HEK293T (cell line): ENCODE measurements at regions of chr2 and their contacts with region 1.

Region 1: DNA sequence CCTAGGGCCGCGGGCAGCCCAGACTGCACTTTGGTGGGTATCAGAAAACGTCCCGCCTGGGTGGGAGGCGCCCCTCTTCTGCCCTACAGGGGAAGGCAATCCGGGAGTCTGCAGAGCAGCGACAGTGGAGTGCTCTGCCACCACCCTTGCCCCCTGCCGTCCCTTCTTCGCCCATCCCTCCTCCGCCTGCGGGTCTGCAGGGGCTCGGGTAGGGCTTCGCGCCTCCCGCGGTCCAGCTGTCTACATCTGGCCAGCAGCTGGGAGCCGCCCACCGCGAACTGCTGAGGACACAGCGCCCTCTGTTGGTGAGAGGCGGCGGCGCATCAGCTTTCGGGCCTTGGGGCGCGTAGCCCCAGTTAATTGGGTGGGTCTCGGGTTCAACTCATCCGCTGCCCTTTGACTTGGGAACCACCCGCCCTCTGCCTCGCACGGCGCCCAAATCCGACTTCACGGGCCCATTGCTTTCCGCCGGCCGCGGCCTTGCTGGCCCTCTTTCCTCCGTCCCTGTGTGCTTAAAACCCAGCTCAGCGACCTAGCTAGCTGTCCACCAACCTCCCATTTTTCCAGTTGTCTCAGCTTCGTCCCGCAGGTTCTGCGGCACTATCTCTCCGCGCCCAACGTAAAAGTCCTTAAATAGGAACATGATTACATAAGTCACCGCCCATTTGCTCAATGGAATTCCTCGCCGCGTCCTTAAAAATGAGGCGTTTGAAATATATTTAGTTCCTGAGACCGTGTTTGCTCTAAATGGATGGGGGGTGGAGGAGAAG is 17.6 kb downstream of the WNT10A start:
- DNase-seq: peak; percentile 83

Region 2: DNA sequence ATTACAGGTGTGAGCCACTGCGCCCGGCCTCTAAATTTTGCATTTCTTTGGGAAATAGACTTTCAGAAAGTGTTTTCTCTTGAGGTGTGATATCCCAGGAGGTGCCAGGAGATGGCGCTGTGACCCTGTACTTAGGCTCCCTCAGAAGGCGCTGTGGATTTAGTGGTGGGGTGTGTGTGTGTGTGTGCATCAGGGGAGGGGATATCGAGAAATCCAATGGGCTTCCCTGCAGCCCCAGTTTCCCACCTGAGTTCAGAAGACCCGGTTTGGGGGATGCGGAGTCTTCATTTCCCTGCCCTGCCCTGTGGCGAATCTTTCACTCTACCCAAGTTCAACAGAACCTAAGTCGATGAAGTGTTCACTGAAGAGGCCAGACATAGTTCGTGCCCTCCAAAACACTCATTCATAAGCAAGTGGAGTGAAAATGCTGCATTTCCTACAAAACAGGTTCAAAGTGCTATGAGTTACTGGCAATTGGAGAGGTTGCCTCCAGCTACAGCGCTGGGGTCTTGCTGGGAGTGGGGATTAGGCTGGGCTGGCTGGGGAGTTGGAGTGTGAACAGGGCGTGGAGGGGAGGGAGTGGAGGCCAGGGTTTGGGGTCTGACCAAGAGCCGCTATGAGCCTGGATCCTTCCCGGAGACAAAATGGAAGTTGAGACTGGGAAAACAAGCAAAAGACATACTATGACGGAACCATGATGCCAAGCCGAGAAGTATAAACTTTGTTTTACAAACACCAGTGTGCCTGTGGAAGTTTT is 45.2 kb before region 1 on chr2:
- CTCF ChIA-PET with region 1: interaction called, 21 read pairs
- POLR2A ChIA-PET with region 1: no interaction called
- DNase-seq: peak; percentile 66

Region 3: GRCh38 chr2:218876562-218877219 is 21.6 kb before region 1 on chr2:
- CTCF ChIA-PET with region 1: interaction called, 71 read pairs
- POLR2A ChIA-PET with region 1: interaction called, 3 read pairs
- DNase-seq: peak; percentile 75

Region 4: DNA sequence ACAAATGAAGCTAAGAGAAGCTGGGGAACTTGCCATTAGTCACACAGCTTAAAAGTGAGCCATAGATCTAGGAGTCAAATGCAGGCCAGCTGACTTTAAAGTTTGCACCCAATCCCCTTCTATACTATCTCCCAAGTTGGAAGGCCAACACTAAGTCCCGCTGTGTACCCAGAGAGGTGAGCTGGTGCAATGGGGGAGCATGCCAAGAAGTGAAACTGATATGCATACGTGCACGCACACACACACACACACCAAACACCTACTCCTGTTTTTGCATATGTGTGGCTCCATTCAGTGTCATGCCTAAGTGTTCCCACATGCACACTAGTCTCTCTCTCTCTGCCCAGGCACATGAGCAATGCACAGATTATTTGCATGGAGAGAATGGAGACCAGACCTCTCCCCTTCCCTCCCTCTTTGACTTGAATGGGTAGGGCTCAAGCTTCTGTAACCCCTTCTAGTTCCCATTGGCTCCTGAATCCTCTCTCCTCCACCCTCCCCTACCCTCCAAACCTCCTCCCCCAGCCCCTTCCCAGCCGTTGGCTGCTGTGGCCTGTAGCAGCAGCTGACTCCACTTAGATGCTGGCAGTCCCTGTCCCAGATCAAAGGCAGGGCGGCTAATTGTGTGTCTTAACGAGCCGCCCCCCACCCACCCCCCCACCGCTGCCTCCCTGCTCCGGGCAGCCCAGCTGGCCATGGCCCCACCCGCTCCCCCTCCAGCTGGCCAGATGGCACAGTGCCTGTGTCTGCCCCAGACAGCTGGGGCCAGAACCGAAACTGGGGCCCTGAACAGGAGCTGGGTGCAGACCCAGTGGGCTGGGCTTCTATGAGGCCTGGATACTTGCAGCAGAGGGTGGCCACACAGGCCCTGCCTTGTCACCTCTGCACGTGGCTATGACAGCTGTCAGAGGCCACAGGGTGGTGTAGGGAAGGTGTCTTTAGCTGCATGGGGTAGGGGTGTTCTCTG is 12.0 kb before region 1 on chr2:
- CTCF ChIA-PET with region 1: interaction called, 27 read pairs
- POLR2A ChIA-PET with region 1: interaction called, 3 read pairs
- DNase-seq: no peak

Region 5: DNA sequence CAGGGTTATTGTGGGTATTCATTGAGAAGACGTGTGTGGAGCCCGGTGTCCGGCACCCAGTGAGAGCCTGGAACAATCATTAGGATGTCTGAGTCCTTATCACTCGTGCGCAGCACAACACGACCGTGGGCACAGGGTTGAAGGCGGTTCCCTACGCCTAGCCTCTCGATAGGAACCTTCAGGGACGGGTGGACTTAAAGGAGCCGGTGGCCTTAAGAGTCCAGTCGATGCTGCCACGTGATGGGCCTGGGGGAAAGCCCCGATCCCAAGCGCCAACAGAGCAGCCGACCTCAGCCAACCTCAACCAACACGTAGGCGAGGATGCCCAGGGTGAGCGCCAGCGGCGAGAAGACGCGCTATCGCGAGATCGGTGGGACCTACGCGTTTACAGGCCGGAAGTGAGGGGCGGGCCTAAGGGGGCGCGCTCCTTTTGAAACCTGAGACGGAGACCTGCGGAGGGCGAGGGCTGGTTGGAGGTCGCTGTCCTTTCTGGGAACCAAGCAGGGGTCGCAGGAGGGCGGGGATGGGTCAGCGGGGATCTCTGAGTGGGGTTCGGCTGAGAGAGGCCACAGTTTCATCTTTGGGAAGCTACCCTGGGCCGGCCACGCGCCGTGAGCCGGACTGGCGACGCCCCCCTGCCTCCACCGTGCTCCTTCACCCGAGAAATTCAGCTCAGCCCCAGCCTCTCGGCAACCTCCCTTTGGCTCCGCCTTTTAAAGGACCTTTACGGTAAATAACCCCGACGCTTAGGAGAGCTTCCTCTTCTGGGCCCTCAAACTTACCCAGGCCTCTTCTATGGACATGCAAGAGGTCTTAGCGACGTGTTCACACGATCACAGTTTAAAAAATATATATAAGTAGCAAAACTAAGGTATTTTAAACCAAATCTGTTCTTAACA is 10.7 kb after region 1 on chr2:
- CTCF ChIA-PET with region 1: interaction called, 15 read pairs
- POLR2A ChIA-PET with region 1: interaction called, 13 read pairs
- DNase-seq: peak; percentile 95

Region 6: DNA sequence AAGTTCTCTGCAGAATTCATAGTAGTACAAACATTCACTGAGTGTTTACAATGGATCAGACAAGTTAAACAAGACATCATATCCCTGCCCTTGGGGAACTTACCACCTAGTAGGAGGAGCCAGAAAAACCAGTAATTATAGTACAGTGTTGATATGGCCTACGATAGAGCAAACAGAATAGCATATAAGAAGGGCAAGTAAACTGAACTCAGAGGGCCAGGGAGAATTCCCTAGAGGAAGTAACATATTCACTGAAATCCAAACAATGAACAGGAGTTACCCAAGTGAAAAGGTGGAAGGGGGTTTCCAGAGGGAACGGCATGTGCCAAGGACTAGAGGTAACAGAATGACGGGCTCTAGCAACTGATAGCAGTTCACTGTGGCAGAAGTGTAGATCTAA is 228.3 kb after region 1 on chr2:
- CTCF ChIA-PET with region 1: no interaction called
- POLR2A ChIA-PET with region 1: no interaction called
- DNase-seq: no peak